Common myeloid progenitor, CD34-positive (primary cell): ENCODE measurements at regions of chr3 and their contacts with region 1.

Region 1: DNA sequence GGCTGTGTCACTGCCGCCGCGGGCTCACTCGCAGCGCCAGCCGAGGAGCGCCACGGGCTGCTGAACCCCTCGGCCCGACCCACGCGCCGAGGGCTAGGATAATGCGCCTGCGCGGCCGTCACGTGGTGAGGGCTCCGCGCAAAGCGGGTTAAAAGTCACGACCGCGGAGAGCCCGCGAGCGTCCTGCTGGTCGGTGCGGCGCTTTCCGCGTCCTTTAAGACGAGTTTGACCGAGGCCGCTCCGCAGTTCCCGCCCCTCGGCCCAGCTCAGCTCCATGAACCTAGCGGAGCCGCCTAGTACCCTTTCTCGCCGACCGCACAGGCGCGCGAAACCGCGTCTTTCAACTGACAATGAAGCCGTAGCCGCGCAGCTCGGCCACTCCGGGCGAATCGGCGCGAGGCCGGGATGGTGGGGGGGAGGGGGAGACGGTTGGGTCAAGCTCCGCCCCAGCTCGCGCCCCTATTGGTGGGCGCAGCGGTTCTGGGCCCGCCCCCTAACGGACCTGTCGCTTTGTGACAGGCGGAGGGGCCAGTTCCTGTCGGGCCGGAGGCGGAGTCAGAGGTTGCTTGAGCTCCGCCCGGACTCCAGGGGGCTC is 636 bp upstream of the STT3B start:
- DNase-seq: peak; percentile 98 to 99 (median 99)
- H3K4me3 ChIP-seq: peak overlapping the region; percentile 82 to 99 (median 91)
- H3K27ac ChIP-seq: peak overlapping the region; percentile 90 to 97
- H3K4me1 ChIP-seq: peaks cover 33 to 58% (median 48%) of the 10 kb centered on the region in 4 experiments
- H3K27me3 ChIP-seq: no peaks in the 10 kb centered on the region

Region 2: DNA sequence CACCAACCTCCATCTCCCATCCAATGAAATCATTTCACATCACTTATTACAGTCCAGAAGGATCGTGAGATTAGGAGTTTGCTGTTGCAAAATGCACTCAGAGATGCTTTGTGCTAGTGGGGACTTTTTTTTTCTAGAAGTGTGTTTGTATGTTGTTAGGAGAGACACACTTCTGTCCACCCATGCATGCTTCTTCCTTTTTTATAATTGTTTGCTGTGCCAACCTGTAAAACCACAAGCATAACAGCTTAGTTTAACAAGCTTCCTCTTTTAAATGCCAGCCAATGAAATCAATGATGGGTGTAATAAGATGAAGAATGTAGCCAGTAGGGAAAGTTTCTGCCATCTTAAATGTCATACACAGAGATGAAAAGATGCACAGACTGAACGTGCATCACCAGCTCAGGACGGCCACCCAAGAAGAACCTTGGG is 304.9 kb before region 1 on chr3:
- CTCF ChIA-PET with region 1: interaction called, 3 read pairs
- POLR2A ChIA-PET with region 1: interaction called, 12 read pairs
- DNase-seq: peak; percentile 87 to 99 (median 97)
- H3K4me3 ChIP-seq: peak overlapping the region in 1 of 7 experiments; percentile 30
- H3K27ac ChIP-seq: peak overlapping the region; percentile 91 to 94
- H3K4me1 ChIP-seq: peaks cover 49 to 88% (median 79%) of the 10 kb centered on the region in 4 experiments
- H3K27me3 ChIP-seq: no peaks in the 10 kb centered on the region

Region 3: DNA sequence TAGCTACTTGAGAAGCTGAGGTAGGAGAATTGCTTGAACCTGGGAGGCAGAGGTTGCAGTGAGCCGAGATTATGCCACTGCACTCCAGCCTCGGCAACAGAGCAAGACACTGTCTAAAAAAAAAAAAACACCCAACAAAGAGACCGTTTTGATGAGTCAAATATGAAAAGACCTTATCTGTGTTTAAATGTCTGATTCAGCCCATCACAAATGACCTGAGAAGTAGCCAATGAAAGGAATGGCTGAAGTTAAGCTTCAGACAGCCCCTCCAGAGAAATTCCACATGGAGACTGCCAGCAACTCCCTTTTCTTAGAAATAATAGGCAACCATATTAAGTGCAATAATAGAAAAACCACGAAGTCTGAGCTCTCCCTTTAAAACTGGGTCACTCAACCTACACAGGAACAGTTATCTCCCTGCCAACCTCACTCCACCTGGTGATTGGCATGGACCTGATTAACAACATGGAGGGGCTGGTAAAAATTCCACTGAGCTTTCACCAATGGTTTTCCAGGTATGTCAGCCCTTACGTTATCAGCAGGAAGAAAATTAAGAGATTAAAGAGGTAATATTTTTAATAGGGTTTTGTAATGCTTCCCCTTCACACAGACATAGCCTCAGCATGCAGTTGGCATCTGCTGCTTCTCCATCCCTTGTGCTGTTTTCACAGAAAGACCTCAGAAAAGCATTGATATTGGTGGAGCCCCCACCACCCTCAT is 237.5 kb before region 1 on chr3:
- CTCF ChIA-PET with region 1: no interaction called
- POLR2A ChIA-PET with region 1: no interaction called
- DNase-seq: no peak
- H3K4me3 ChIP-seq: no peak overlapping the region
- H3K27ac ChIP-seq: no peak overlapping the region
- H3K4me1 ChIP-seq: peaks cover 0 to 3% (median 0%) of the 10 kb centered on the region in 4 experiments
- H3K27me3 ChIP-seq: no peaks in the 10 kb centered on the region

Region 4: GRCh38 chr3:31462050-31462569 is 70.0 kb before region 1 on chr3:
- CTCF ChIA-PET with region 1: interaction called, 48 read pairs
- POLR2A ChIA-PET with region 1: interaction called, 18 read pairs
- DNase-seq: peak; percentile 94 to 99 (median 99)
- H3K4me3 ChIP-seq: peak overlapping the region in 3 of 7 experiments; percentile 12 to 49 (median 24)
- H3K27ac ChIP-seq: peak overlapping the region; percentile 36 to 75
- H3K4me1 ChIP-seq: peaks cover 30 to 65% (median 37%) of the 10 kb centered on the region in 4 experiments
- H3K27me3 ChIP-seq: no peaks in the 10 kb centered on the region

Region 5: DNA sequence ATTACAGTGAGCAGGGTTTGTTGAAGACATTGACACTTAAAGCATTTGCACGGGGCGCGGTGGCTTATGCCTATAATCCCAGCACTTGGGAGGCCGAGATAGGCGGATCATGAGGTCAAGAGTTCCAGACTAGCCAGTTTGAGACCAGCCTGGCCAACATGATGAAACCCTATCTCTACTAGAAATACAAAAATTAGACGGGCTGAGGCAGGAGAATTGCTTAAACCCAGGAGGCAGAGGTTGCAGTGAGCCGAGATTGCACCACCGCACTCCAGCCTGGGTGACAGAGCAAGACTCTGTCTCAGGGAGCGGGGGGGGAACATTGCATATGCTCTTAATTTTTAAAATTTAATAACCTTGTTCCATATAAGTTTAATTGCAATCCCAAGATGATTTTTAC is 12.5 kb after region 1 on chr3:
- CTCF ChIA-PET with region 1: interaction called, 14 read pairs
- POLR2A ChIA-PET with region 1: interaction called, 4 read pairs
- DNase-seq: no peak
- H3K4me3 ChIP-seq: no peak overlapping the region
- H3K27ac ChIP-seq: peak overlapping the region in 1 of 2 experiments; percentile 25
- H3K4me1 ChIP-seq: peaks cover 6 to 56% (median 30%) of the 10 kb centered on the region in 4 experiments
- H3K27me3 ChIP-seq: no peaks in the 10 kb centered on the region

Region 6: GRCh38 chr3:31620656-31621055 is 88.6 kb after region 1 on chr3:
- CTCF ChIA-PET with region 1: no interaction called
- POLR2A ChIA-PET with region 1: no interaction called
- DNase-seq: no peak
- H3K4me3 ChIP-seq: no peak overlapping the region
- H3K27ac ChIP-seq: no peak overlapping the region
- H3K4me1 ChIP-seq: peaks cover 0 to 12% (median 4%) of the 10 kb centered on the region in 4 experiments
- H3K27me3 ChIP-seq: no peaks in the 10 kb centered on the region